ENCODE measurements at regions of chr10 and their contacts with region 1.

Region 1: GRCh38 chr10:77926566-77927401 is at the start of gene DLG5:
- DNase-seq: peak; percentile 66 to 85 (median 71)
- ATAC-seq: peak; percentile 69 to 89 (median 84)
- H3K4me3 ChIP-seq: peak within 1 kb of the TSS; percentile 55 to 98 (median 68)
- H3K27ac ChIP-seq: peak within 1 kb of the TSS in 11 of 12 donors; percentile 17 to 89 (median 59)
- H3K4me1 ChIP-seq: peaks cover 0 to 33% (median 23%) of the 10 kb centered on the region in 12 donors
- H3K27me3 ChIP-seq: peaks cover 0 to 23% (median 0%) of the 10 kb centered on the region in 9 donors
- CTCF ChIP-seq: peak in 1 of 12 donors; percentile 7
- POLR2A ChIP-seq: peak in 1 of 2 donors; percentile 13
- total RNA-seq, gene DLG5: 7.6 to 27.1 (median 13.6) TPM

Region 2: GRCh38 chr10:77943121-77943901 is 16.5 kb after region 1 on chr10:
- intact Hi-C with region 1: loop called in 1 of 10 experiments (anchors 1 kb)
- DNase-seq: no peak
- ATAC-seq: peak; percentile 18 to 91 (median 62)
- H3K4me3 ChIP-seq: no peak overlapping the region
- H3K27ac ChIP-seq: no peak overlapping the region
- H3K4me1 ChIP-seq: peaks cover 0 to 15% (median 4%) of the 10 kb centered on the region in 12 donors
- H3K27me3 ChIP-seq: no peaks in the 10 kb centered on the region
- CTCF ChIP-seq: no peak
- POLR2A ChIP-seq: no peak

Region 3: GRCh38 chr10:77970869-77971803 is 44.4 kb after region 1 on chr10:
- intact Hi-C with region 1: loop called in 2 of 10 experiments (anchors 5 kb)
- DNase-seq: peak in 4 of 5 donors; percentile 75 to 83 (median 79)
- ATAC-seq: peak; percentile 88 to 97 (median 93)
- H3K4me3 ChIP-seq: peak overlapping the region in 2 of 12 donors; percentile 25
- H3K27ac ChIP-seq: peak overlapping the region in 11 of 12 donors; percentile 2 to 88 (median 70)
- H3K4me1 ChIP-seq: peaks cover 0 to 18% (median 12%) of the 10 kb centered on the region in 12 donors
- H3K27me3 ChIP-seq: no peaks in the 10 kb centered on the region
- CTCF ChIP-seq: no peak
- POLR2A ChIP-seq: no peak

Region 4: GRCh38 chr10:77983384-77984341 is 56.9 kb after region 1 on chr10:
- intact Hi-C with region 1: loop called in 2 of 10 experiments (anchors 5 to 10 kb)
- DNase-seq: no peak
- ATAC-seq: peak in 3 of 4 donors; percentile 59 to 82 (median 67)
- H3K4me3 ChIP-seq: no peak overlapping the region
- H3K27ac ChIP-seq: peak overlapping the region in 3 of 12 donors; percentile 12 to 52 (median 46)
- H3K4me1 ChIP-seq: peaks cover 0 to 17% (median 7%) of the 10 kb centered on the region in 12 donors
- H3K27me3 ChIP-seq: no peaks in the 10 kb centered on the region
- CTCF ChIP-seq: no peak
- POLR2A ChIP-seq: no peak

Region 5: DNA sequence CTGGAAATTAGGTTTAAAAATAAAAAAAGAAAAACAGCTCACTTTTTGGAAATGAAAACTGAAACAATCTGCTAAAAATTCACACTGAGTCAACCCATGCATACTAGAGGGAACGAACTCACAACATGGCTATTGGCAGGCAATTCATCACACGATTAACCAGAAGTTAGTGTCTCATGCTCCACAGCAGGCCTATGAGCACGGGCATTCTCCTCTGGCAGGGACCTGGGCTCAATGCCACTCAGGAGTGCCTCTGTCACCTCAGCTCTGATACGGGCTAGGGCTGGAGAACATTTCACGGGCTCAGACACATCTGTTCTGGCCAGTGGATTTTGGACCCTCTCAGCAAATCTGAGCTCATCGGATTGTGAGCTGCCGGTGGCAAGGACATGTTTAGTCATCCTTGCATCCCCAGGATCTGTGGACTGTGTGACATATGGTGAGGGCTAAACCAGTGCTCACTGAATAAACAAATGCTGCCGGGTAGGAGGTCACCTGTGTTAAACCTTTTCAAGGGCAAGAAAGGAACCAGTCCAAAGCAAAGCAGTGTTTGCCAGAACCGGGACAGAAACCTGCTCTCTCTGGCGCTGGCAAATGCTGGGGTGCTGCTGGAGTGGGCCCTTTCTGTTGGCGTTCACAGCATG is 62.4 kb after region 1 on chr10:
- intact Hi-C with region 1: loop called in 2 of 10 experiments (anchors 5 to 10 kb)
- DNase-seq: peak; percentile 49 to 83 (median 68)
- ATAC-seq: peak; percentile 96 to 98 (median 98)
- H3K4me3 ChIP-seq: no peak overlapping the region
- H3K27ac ChIP-seq: peak overlapping the region; percentile 27 to 73 (median 58)
- H3K4me1 ChIP-seq: peaks cover 0 to 18% (median 3%) of the 10 kb centered on the region in 12 donors
- H3K27me3 ChIP-seq: no peaks in the 10 kb centered on the region
- CTCF ChIP-seq: no peak
- POLR2A ChIP-seq: no peak

Measured in heart left ventricle (tissue), 16 donors.